GM12878 (cell line): ENCODE measurements at regions of chr17 and their contacts with region 1.

Region 1: DNA sequence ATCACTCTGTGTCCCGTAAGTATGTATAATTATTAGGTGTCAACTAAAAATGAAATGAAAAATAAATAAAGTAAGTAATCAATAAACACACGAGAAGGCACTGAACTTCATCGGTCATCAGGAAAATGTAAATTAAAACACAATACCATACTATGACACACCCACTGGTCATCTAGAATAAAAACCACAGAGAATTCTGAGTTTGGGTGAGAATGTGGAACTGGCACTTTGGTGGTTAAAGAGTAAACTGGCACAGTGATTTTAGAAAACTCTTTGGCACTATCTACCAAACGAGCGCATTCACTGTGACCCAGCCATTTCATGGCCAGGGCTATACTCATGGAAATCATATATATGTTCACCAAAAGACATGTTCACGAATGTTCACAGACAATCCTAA is 98.2 kb downstream of the HS3ST3A1 start:
- DNase-seq: no peak
- ATAC-seq: no peak
- H3K4me3 ChIP-seq: no peak overlapping the region
- H3K27ac ChIP-seq: no peak overlapping the region
- H3K4me1 ChIP-seq: no peaks in the 10 kb centered on the region
- H3K27me3 ChIP-seq: no peaks in the 10 kb centered on the region
- CTCF ChIP-seq: no peak
- EP300 ChIP-seq: no peak
- POLR2A ChIP-seq: no peak
- RAD21 ChIP-seq: no peak

Region 2: GRCh38 chr17:12744298-12744697 is 759.2 kb before region 1 on chr17:
- CTCF ChIA-PET with region 1: no interaction called
- POLR2A ChIA-PET with region 1: no interaction called
- RAD21 ChIA-PET with region 1: no interaction called
- SMC1A ChIA-PET with region 1: no interaction called
- in situ Hi-C with region 1: no loop called
- intact Hi-C with region 1: no loop called
- DNase-seq: no peak
- ATAC-seq: no peak
- H3K4me3 ChIP-seq: no peak overlapping the region
- H3K27ac ChIP-seq: no peak overlapping the region
- H3K4me1 ChIP-seq: no peaks in the 10 kb centered on the region
- H3K27me3 ChIP-seq: no peaks in the 10 kb centered on the region
- CTCF ChIP-seq: no peak
- EP300 ChIP-seq: no peak
- POLR2A ChIP-seq: no peak
- RAD21 ChIP-seq: no peak

Region 3: DNA sequence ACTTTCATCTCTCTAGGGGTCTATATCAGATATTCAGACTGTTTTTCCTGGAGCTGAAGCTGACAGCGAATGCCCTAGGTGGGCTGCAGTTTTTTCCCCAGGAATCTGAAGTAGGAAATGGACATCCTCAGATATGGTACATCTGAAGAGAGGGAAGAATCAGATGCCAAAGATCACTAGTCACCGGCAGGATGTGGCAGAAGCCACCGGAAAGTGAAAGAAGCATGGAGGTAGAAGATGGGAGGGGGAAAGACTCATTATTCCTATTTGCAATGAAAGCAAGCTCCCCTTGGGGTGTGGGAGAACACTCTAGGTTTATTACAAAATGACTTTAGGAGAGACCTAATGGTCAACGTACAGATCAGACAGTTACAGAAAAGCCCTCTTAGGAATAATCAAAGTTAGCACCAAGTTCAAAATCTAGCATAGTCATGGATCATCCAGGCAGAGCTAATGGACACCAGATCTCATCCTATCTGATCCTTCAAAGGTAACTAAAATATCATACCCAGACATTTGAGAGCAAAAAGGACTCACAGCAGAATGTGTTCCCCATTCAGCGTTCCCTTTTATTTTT is 12.5 kb before region 1 on chr17:
- CTCF ChIA-PET with region 1: interaction called, 4 read pairs
- POLR2A ChIA-PET with region 1: interaction called, 6 read pairs
- RAD21 ChIA-PET with region 1: interaction called, 5 read pairs
- SMC1A ChIA-PET with region 1: interaction called, 30 read pairs
- in situ Hi-C with region 1: no loop called
- intact Hi-C with region 1: no loop called
- DNase-seq: no peak
- ATAC-seq: no peak
- H3K4me3 ChIP-seq: no peak overlapping the region
- H3K27ac ChIP-seq: no peak overlapping the region
- H3K4me1 ChIP-seq: no peaks in the 10 kb centered on the region
- H3K27me3 ChIP-seq: no peaks in the 10 kb centered on the region
- CTCF ChIP-seq: no peak
- EP300 ChIP-seq: no peak
- POLR2A ChIP-seq: no peak
- RAD21 ChIP-seq: no peak

Region 4: GRCh38 chr17:13609936-13610335 is 106.4 kb after region 1 on chr17:
- CTCF ChIA-PET with region 1: no interaction called
- POLR2A ChIA-PET with region 1: no interaction called
- RAD21 ChIA-PET with region 1: no interaction called
- SMC1A ChIA-PET with region 1: no interaction called
- in situ Hi-C with region 1: no loop called
- intact Hi-C with region 1: no loop called
- DNase-seq: no peak
- ATAC-seq: no peak
- H3K4me3 ChIP-seq: no peak overlapping the region
- H3K27ac ChIP-seq: no peak overlapping the region
- H3K4me1 ChIP-seq: no peaks in the 10 kb centered on the region
- H3K27me3 ChIP-seq: no peaks in the 10 kb centered on the region
- CTCF ChIP-seq: no peak
- EP300 ChIP-seq: no peak
- POLR2A ChIP-seq: no peak
- RAD21 ChIP-seq: no peak

Region 5: GRCh38 chr17:13665872-13666635 is 162.5 kb after region 1 on chr17:
- CTCF ChIA-PET with region 1: no interaction called
- POLR2A ChIA-PET with region 1: no interaction called
- RAD21 ChIA-PET with region 1: no interaction called
- SMC1A ChIA-PET with region 1: no interaction called
- in situ Hi-C with region 1: no loop called
- intact Hi-C with region 1: no loop called
- DNase-seq: no peak
- ATAC-seq: no peak
- H3K4me3 ChIP-seq: no peak overlapping the region
- H3K27ac ChIP-seq: no peak overlapping the region
- H3K4me1 ChIP-seq: no peaks in the 10 kb centered on the region
- H3K27me3 ChIP-seq: no peaks in the 10 kb centered on the region
- CTCF ChIP-seq: no peak
- EP300 ChIP-seq: no peak
- POLR2A ChIP-seq: no peak
- RAD21 ChIP-seq: no peak